CD4-positive, alpha-beta memory T cell (primary cell): ENCODE measurements at regions of chr6 and their contacts with region 1.

Region 1: GRCh38 chr6:16761471-16762267 is 409 bp upstream of the ATXN1 start:
- DNase-seq: peak; percentile 87 to 96 (median 89)
- H3K4me3 ChIP-seq: peak overlapping the region; percentile 75 to 84
- H3K4me3 Mint-ChIP-seq: peak overlapping the region; percentile 91 to 100 (median 98)
- H3K27ac ChIP-seq: peak overlapping the region; percentile 99
- H3K27ac Mint-ChIP-seq: peak overlapping the region; percentile 97 to 100 (median 99)
- H3K4me1 ChIP-seq: peaks cover 57% of the 10 kb centered on the region
- H3K4me1 Mint-ChIP-seq: peaks cover 46 to 87% (median 57%) of the 10 kb centered on the region in 4 donors
- H3K27me3 ChIP-seq: no peaks in the 10 kb centered on the region
- H3K27me3 Mint-ChIP-seq: peaks cover 0 to 4% of the 10 kb centered on the region in 2 donors

Region 2: DNA sequence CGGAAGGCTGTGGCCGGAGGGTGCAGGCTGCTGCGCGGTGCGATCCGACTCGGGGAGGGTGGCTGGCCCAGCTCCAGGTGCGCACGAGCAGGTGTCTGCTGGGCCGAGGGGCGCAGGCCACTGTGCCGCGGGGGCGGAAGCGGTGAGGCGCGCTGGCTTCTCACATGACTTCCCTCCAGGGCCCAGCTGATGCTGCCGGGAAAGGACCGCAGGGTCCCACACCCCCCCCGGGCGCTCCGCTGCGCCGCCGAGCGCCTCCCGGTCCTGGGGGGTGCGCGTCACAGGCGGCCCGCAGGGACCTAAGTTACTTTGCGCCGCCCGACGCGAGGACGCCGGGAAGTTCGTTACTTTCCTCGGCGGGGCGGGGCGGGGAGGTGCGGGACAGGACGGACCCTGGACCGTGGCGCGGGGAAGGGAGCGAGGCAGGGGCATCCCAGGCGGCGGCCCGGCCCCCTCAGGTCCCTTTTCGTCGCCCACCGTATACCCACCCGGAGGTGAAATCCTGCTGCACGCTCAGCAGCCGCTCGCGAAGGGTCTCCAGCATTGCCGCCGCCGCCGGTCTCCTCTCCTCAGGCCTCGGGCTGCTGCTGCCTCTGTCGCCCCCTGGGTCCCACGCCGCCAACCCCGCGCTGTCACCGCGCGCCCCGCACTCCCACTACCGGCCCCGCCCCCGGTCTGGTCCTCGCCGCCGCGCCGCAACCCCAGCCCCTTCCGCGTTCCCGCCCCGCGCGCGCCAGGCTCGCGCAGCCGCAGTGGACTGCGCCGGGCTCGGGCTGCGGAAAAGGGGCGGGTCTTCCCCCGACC is 1099.1 kb before region 1 on chr6 and contains the start of gene DTNBP1:
- CTCF ChIA-PET with region 1: no interaction called
- POLR2A ChIA-PET with region 1: no interaction called
- intact Hi-C with region 1: loop called (anchors 5 kb)
- DNase-seq: peak; percentile 79 to 87 (median 81)
- H3K4me3 ChIP-seq: peak within 1 kb of the TSS; percentile 62 to 76
- H3K4me3 Mint-ChIP-seq: peak within 1 kb of the TSS; percentile 73 to 91 (median 86)
- H3K27ac ChIP-seq: peak within 1 kb of the TSS; percentile 60
- H3K27ac Mint-ChIP-seq: peak within 1 kb of the TSS; percentile 77 to 88 (median 86)
- H3K4me1 ChIP-seq: peaks cover 21% of the 10 kb centered on the region
- H3K4me1 Mint-ChIP-seq: peaks cover 24 to 47% (median 37%) of the 10 kb centered on the region in 4 donors
- H3K27me3 ChIP-seq: no peaks in the 10 kb centered on the region
- H3K27me3 Mint-ChIP-seq: peaks cover 0 to 4% of the 10 kb centered on the region in 2 donors
- total RNA-seq, gene DTNBP1: 24.1 TPM

Region 3: DNA sequence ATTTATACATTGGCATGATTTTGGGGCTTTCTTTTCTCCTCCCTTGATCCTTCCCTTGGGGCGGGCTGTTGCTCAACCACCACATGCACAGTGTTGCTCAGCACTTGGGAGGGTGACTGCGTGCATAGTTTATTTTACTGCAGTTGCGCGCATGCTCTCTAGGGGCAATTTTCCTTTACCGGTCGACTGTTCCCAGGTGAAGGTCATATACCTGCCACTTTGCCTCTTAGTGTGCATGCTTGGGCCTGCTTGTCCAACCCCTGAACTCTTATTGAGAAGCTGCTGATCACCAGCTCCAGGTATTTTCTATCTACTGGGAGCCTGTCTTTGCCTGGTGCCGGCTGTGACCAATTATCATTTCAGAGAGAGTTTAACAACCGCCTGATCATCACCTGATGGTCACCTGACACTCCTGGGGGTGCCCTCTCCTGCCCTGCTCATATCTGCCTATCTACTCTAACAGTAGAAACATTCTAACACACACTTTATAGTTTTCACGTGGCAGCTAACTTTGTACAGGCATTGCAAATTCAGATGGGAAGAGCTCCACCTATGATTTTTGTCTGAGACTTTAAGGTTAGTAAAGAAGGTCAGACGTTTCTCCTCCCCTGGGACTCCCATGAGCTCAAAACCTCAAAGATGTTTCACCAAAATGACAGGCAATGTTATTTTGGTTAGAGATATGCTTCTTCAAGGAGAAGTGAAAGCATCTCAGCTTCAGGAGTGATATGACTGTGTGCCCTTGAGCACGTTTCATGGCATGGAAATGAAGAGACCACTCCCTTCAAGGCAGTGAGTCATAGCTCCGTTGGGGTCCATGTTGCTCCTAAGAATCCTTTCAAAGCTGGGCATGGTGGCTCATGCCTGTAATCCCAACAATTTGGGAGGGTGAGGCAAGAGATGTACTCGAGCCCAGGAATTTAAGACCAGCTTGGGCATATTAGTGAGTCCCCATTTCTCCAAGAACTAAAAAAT is 860.2 kb before region 1 on chr6:
- CTCF ChIA-PET with region 1: no interaction called
- POLR2A ChIA-PET with region 1: no interaction called
- intact Hi-C with region 1: no loop called
- DNase-seq: no peak
- H3K4me3 ChIP-seq: no peak overlapping the region
- H3K4me3 Mint-ChIP-seq: no peak overlapping the region
- H3K27ac ChIP-seq: no peak overlapping the region
- H3K27ac Mint-ChIP-seq: no peak overlapping the region
- H3K4me1 ChIP-seq: no peaks in the 10 kb centered on the region
- H3K4me1 Mint-ChIP-seq: no peaks in the 10 kb centered on the region
- H3K27me3 ChIP-seq: no peaks in the 10 kb centered on the region
- H3K27me3 Mint-ChIP-seq: peaks cover 1 to 11% of the 10 kb centered on the region in 2 donors

Region 4: DNA sequence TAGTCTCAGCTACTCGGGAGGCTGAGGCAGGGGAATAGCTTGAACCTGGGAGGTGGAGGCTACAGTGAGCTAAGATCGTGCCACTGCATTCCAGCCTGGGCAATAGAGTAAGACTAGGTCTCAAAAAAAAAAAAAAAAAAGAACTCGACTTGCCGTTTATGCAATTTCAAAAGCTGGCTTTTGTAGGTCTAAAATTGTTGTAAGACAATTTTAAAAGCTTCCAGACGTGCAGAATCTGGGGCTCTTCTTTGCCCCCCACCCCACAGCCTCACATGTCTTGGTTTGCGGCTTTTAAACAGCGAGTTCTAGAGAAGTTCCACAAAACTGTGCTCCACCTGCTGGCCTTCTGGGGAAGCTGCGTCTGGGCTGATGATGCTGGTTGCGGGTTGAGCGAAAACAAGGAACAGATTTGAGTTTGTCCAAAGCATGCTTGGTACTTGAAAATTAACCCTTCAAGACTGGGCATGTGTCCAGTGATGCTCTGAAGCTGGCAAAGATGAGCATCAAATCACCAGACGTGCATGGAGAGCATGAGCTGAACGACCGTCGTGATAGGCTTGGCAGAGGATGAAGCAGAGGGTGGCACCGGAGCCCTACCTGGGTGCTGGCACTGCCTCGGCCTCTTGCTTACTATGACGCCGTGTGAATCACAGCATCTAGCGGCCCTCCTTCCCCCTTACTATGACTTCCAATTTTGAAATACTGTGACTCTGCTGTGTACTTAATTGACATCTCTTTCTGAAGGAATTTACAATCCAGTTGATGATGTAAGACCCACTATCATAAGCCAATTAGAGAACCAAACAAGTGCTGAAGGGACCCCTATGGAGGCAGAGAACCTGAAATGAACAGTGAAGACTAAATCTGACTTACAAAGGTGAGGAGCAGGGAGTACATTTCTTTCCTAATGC is 351.9 kb before region 1 on chr6:
- CTCF ChIA-PET with region 1: interaction called, 9 read pairs
- POLR2A ChIA-PET with region 1: interaction called, 7 read pairs
- intact Hi-C with region 1: loop called (anchors 5 kb)
- DNase-seq: peak; percentile 45 to 78 (median 54)
- H3K4me3 ChIP-seq: no peak overlapping the region
- H3K4me3 Mint-ChIP-seq: peak overlapping the region in 7 of 8 donors; percentile 49 to 71 (median 68)
- H3K27ac ChIP-seq: no peak overlapping the region
- H3K27ac Mint-ChIP-seq: peak overlapping the region in 6 of 7 donors; percentile 7 to 78 (median 68)
- H3K4me1 ChIP-seq: peaks cover 22% of the 10 kb centered on the region
- H3K4me1 Mint-ChIP-seq: peaks cover 33 to 61% (median 48%) of the 10 kb centered on the region in 4 donors
- H3K27me3 ChIP-seq: no peaks in the 10 kb centered on the region
- H3K27me3 Mint-ChIP-seq: no peaks in the 10 kb centered on the region

Region 5: GRCh38 chr6:16548121-16548520 is 213.5 kb before region 1 on chr6:
- CTCF ChIA-PET with region 1: no interaction called
- POLR2A ChIA-PET with region 1: no interaction called
- intact Hi-C with region 1: no loop called
- DNase-seq: no peak
- H3K4me3 ChIP-seq: no peak overlapping the region
- H3K4me3 Mint-ChIP-seq: no peak overlapping the region
- H3K27ac ChIP-seq: no peak overlapping the region
- H3K27ac Mint-ChIP-seq: peak overlapping the region in 2 of 7 donors; percentile 6 to 23
- H3K4me1 ChIP-seq: no peaks in the 10 kb centered on the region
- H3K4me1 Mint-ChIP-seq: peaks cover 4 to 12% (median 6%) of the 10 kb centered on the region in 4 donors
- H3K27me3 ChIP-seq: no peaks in the 10 kb centered on the region
- H3K27me3 Mint-ChIP-seq: no peaks in the 10 kb centered on the region

Region 6: GRCh38 chr6:16618962-16619361 is 142.7 kb before region 1 on chr6:
- CTCF ChIA-PET with region 1: interaction called, 3 read pairs
- POLR2A ChIA-PET with region 1: interaction called, 12 read pairs
- intact Hi-C with region 1: no loop called
- DNase-seq: no peak
- H3K4me3 ChIP-seq: no peak overlapping the region
- H3K4me3 Mint-ChIP-seq: no peak overlapping the region
- H3K27ac ChIP-seq: no peak overlapping the region
- H3K27ac Mint-ChIP-seq: peak overlapping the region in 4 of 7 donors; percentile 31 to 81 (median 47)
- H3K4me1 ChIP-seq: peaks cover 48% of the 10 kb centered on the region
- H3K4me1 Mint-ChIP-seq: peaks cover 37 to 58% (median 54%) of the 10 kb centered on the region in 4 donors
- H3K27me3 ChIP-seq: no peaks in the 10 kb centered on the region
- H3K27me3 Mint-ChIP-seq: no peaks in the 10 kb centered on the region

Region 7: DNA sequence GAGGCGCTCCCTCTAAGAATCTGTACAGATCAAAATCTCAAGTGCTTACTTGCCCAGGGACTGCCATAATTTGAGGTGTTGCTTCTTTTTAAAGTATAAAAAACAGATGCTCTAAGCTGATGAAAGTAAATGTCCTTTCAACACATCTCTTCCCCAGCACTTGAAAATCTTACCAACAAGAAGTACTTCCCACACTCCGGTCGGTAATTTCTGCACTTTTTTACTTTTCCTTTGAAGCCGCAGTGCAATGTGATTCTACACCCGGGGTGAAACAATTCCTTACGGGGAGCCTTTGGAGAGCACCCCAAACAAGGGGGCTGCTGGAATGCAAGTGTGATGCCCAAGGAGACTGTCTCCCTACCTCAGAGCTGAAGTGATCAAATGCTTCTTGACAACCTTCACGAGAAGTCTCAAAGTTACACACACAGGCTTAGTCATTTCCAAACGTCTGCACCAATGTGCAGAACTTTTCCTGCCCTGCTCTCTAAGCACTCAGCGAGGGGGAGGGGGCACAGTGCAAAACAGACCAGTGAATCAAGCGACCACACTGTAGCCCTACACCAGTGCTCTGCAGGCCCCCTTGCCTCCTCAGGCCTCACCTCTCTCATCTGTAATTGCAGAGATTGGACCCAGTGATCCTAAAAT is 57.1 kb before region 1 on chr6:
- CTCF ChIA-PET with region 1: interaction called, 21 read pairs
- POLR2A ChIA-PET with region 1: interaction called, 70 read pairs
- intact Hi-C with region 1: loop called (anchors 2 kb)
- DNase-seq: peak in 1 of 5 donors; percentile 66
- H3K4me3 ChIP-seq: peak overlapping the region; percentile 36 to 42
- H3K4me3 Mint-ChIP-seq: peak overlapping the region; percentile 78 to 91 (median 82)
- H3K27ac ChIP-seq: peak overlapping the region; percentile 12
- H3K27ac Mint-ChIP-seq: peak overlapping the region; percentile 81 to 93 (median 84)
- H3K4me1 ChIP-seq: peaks cover 63% of the 10 kb centered on the region
- H3K4me1 Mint-ChIP-seq: peaks cover 53 to 87% (median 63%) of the 10 kb centered on the region in 4 donors
- H3K27me3 ChIP-seq: no peaks in the 10 kb centered on the region
- H3K27me3 Mint-ChIP-seq: no peaks in the 10 kb centered on the region

Region 8: DNA sequence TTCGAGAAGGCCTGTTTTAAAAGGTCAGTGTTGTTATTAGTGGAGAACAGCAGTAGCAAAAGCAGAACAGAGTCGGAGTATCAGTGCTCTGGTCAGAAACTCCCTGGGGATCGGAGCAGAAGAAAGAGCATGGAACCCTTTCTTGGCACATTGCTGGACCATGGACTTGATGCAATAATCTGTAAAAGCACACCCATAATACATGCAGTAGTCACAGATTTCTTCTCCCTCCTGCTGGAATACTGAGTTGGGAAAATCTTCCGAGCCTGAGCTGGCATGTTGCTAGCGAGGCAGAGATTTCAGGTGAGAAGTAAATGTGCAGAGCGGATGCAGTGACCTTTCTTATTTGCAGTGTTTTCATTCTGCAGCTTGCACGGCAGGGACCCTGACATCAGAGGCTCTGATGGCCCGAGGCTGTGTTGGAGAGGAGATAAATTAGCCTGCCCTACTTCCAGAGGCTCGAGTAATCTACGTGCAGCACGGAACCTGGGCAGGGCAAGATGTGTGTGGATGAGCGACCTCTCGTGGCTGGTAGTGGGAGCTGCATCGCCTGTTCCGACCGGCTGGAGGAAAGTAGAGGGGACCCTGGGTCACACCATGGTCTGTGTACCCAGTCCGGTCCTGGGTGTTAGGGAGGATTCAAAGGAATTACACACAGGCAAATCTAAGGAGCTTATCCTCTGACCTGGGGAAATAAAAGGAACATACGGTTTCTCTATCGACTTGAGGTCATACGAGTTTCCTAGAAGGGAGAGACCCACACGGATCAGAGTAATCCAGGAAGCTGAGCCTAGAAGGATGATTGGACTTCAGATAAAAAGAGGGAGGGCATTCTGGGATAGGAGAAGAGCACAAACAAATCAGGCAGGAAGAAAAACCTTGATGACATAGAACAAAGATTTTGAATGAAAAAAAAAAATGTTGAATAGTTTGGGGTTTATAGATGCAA is 203.2 kb after region 1 on chr6:
- CTCF ChIA-PET with region 1: interaction called, 10 read pairs
- POLR2A ChIA-PET with region 1: no interaction called
- intact Hi-C with region 1: loop called (anchors 1 kb)
- DNase-seq: peak; percentile 42 to 62 (median 54)
- H3K4me3 ChIP-seq: no peak overlapping the region
- H3K4me3 Mint-ChIP-seq: peak overlapping the region in 1 of 8 donors; percentile 18
- H3K27ac ChIP-seq: no peak overlapping the region
- H3K27ac Mint-ChIP-seq: no peak overlapping the region
- H3K4me1 ChIP-seq: peaks cover 7% of the 10 kb centered on the region
- H3K4me1 Mint-ChIP-seq: peaks cover 3 to 7% (median 4%) of the 10 kb centered on the region in 4 donors
- H3K27me3 ChIP-seq: no peaks in the 10 kb centered on the region
- H3K27me3 Mint-ChIP-seq: peaks cover 4 to 14% of the 10 kb centered on the region in 2 donors

Region 9: DNA sequence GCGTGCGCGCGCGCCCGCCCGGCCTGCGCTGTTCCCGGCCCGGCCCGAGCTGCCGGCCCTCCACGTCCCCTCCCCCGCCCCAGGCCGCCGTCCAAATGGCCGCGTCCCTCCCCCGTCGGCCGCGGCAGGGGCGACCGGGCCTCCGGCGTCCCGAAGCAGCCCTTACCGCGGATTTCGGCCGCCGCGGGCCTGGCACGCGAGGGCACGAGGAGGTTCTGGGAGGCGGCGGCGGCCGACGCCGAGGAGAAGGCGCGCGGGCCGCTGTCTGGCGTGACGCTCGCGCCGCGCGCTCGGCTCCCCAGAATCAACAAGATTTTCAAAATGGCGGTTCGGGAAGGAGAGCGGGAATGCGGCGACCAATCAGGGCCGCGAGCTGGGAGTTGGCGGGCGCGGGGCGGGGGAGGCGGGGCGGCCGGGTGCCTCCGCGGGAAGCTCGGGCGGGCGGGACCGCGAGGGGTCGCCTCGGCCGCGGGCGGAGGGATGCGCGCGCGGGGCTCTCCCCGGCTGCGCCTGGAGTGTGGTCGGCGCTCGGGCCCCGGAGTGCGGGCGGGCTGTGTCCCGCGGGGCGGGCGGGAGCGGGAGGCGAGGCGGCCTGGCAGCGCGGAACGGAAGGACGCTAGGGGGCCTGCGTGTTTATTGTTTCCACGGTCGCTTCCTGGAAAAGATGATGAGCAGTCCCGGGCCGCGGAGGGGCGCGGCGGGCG is 1502.7 kb after region 1 on chr6 and contains the start of gene DEK:
- CTCF ChIA-PET with region 1: no interaction called
- POLR2A ChIA-PET with region 1: no interaction called
- intact Hi-C with region 1: loop called (anchors 5 kb)
- DNase-seq: peak; percentile 79 to 90 (median 81)
- H3K4me3 ChIP-seq: peak within 1 kb of the TSS; percentile 82 to 89
- H3K4me3 Mint-ChIP-seq: peak within 1 kb of the TSS; percentile 95 to 98 (median 96)
- H3K27ac ChIP-seq: peak within 1 kb of the TSS; percentile 76
- H3K27ac Mint-ChIP-seq: peak within 1 kb of the TSS; percentile 96 to 99 (median 98)
- H3K4me1 ChIP-seq: peaks cover 57% of the 10 kb centered on the region
- H3K4me1 Mint-ChIP-seq: peaks cover 42 to 55% (median 49%) of the 10 kb centered on the region in 4 donors
- H3K27me3 ChIP-seq: no peaks in the 10 kb centered on the region
- H3K27me3 Mint-ChIP-seq: no peaks in the 10 kb centered on the region
- total RNA-seq, gene DEK: 128 to 131 TPM